Posterior vena cava (tissue), 2 donors: ENCODE measurements at regions of chr6 and their contacts with region 1.

Region 1: DNA sequence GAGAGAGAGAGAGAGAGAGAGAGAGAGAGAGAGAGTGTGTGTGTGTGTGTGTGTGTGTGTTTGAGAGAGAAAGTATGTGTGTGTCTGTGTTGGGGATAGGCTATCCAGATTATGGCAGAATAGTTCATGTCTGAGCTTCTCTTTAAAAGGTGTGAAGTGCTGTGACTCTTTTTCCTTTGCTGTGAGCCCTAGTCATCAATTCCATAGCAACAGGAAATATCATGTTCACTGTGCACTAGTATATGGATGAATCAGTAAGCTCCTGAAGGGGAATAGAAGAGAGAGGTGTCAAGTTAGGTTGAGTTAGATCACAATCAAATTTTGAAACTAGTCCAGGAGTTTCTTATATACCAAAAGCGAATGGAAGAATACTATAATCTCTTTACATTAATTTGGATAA is 318.7 kb downstream of the RFPL4B start:
- DNase-seq: no peak

Region 2: DNA sequence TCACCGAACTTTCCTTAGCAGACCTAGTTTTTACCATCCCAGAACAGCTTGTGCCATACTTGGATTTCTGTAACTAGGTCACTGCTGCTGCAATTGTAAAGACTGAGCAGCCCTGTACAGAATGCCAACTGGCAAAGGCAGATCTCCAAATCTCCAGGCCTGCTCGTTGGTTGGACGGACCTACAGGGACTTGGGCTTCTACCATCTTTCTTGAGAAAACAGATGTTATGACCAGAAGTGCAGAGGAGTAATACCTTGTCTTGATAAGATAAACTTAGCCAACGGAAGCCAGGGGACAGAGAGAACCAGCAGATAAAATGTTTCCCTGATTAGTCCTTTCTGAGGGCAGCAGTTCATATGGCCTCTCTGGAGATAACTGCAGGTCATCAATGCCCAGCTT is 14.6 kb before region 1 on chr6:
- intact Hi-C with region 1: no loop called
- DNase-seq: no peak

Region 3: DNA sequence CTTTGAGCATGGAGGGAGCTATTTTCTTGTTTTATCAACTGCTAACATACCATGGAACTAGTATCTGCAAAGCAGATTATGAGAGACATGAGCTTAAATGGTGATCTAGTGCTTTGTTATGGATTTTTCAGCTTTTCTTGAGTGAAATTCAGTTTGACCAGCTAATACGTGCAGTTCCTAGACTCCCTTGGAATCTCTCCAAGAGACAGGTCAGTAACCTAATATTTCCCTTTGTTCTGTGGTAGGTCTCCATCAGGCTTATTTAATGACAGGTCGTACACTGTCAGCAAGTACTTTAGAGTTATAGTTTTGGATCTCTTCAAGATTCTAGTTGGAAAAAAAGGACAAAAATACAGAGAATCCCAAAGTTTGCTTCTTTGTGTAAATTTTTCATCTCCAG is 1261.2 kb after region 1 on chr6:
- intact Hi-C with region 1: loop called in 1 of 2 experiments (anchors 5 kb)
- DNase-seq: no peak